ENCODE measurements at regions of chrX and their contacts with region 1.

Region 1: GRCh38 chrX:9352694-9353411 is 112.0 kb upstream of the TBL1X start:
- DNase-seq: peak; percentile 58
- H3K4me3 Mint-ChIP-seq: no peak overlapping the region
- H3K27ac Mint-ChIP-seq: peak overlapping the region; percentile 4
- H3K4me1 Mint-ChIP-seq: peaks cover 29% of the 10 kb centered on the region
- H3K27me3 Mint-ChIP-seq: no peaks in the 10 kb centered on the region

Region 2: DNA sequence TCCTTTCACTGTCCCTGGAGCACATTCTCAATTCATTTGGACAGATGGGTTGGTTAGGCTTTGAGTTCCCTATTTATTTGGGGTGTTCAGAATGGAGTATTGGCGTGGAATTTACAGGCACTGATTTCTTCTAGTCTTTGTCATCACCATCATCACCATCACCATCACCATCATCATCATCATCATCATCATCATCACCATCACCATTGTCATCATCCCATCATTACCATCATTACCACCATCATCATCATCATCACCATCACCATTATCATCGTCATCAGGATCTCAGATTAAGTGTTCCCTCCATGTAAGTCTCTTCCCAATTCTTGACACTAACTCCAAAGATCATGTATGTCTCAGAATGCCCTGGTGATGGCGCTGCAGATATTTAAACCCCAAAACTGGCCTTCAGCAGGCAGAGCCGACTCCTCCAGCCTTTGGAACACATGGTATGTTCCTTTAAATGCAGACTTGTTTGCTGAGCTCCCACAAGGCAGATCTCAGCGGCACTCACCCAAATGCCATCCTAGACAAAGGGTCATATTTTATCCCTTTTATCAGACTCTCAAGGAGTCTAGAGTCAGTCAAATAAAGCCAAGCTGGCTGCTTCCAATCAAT is 531.8 kb before region 1 on chrX:
- CTCF ChIA-PET with region 1: no interaction called
- intact Hi-C with region 1: loop called (anchors 5 kb)
- DNase-seq: peak; percentile 8
- H3K4me3 Mint-ChIP-seq: no peak overlapping the region
- H3K27ac Mint-ChIP-seq: no peak overlapping the region
- H3K4me1 Mint-ChIP-seq: no peaks in the 10 kb centered on the region
- H3K27me3 Mint-ChIP-seq: peaks cover 2% of the 10 kb centered on the region

Region 3: GRCh38 chrX:8971116-8971515 is 381.7 kb before region 1 on chrX:
- CTCF ChIA-PET with region 1: no interaction called
- intact Hi-C with region 1: loop called (anchors 1 kb)
- DNase-seq: no peak
- H3K4me3 Mint-ChIP-seq: no peak overlapping the region
- H3K27ac Mint-ChIP-seq: no peak overlapping the region
- H3K4me1 Mint-ChIP-seq: no peaks in the 10 kb centered on the region
- H3K27me3 Mint-ChIP-seq: no peaks in the 10 kb centered on the region

Measured in activated naive CD4-positive, alpha-beta T cell treated with anti-CD3 and anti-CD28 coated beads for 36 hours (primary cell).